Activated T-helper 1 cell treated with anti-CD3 and anti-CD28 coated beads, Interleukin-12 subunit alpha, Interleukin-12 subunit beta, Interleukin-2, Interleukin-4 antibody, amounts not matched to agents 30 ng/mL and 10 ng/mL and 1 ng/mL, durations not matched to agents 14 hours and 24 hours and 36 hours (primary cell): ENCODE measurements at regions of chr17 and their contacts with region 1.

Region 1: GRCh38 chr17:83079352-83079747 is at the start of gene METRNL:
- DNase-seq: peak; percentile 51
- H3K4me3 Mint-ChIP-seq: peak within 1 kb of the TSS; percentile 58
- H3K27ac Mint-ChIP-seq: no peak within 1 kb of the TSS
- H3K4me1 Mint-ChIP-seq: peaks cover 28% of the 10 kb centered on the region
- H3K27me3 Mint-ChIP-seq: peaks cover 11% of the 10 kb centered on the region
- total RNA-seq, gene METRNL: 31.1 and 31.4 TPM in 2 replicates

Region 2: GRCh38 chr17:82876602-82877379 is 202.6 kb before region 1 on chr17:
- intact Hi-C with region 1: loop called (anchors 5 kb)
- DNase-seq: no peak
- H3K4me3 Mint-ChIP-seq: peak overlapping the region; percentile 51
- H3K27ac Mint-ChIP-seq: peak overlapping the region; percentile 68
- H3K4me1 Mint-ChIP-seq: peaks cover 55% of the 10 kb centered on the region
- H3K27me3 Mint-ChIP-seq: no peaks in the 10 kb centered on the region

Region 3: DNA sequence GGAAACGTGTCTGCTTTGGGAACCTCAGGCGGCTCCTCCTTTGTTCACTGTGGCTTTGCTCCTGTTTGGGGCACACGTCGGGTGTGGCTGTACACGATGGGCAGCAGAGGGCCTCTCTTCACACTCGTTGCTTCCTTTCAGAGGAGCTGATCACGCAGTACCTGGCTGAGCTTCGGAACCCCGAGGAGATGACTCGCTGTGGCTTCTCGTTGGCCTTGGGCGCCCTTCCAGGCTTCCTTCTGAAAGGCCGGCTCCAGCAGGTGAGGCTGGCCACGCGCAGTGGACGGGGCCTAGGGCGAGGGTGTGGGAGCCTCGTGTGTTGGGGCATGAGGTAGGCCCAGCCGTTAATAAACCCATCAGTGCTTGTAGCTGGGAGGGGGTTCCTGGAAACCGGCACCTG is 154.6 kb before region 1 on chr17:
- intact Hi-C with region 1: no loop called
- DNase-seq: no peak
- H3K4me3 Mint-ChIP-seq: no peak overlapping the region
- H3K27ac Mint-ChIP-seq: no peak overlapping the region
- H3K4me1 Mint-ChIP-seq: no peaks in the 10 kb centered on the region
- H3K27me3 Mint-ChIP-seq: no peaks in the 10 kb centered on the region

Region 4: DNA sequence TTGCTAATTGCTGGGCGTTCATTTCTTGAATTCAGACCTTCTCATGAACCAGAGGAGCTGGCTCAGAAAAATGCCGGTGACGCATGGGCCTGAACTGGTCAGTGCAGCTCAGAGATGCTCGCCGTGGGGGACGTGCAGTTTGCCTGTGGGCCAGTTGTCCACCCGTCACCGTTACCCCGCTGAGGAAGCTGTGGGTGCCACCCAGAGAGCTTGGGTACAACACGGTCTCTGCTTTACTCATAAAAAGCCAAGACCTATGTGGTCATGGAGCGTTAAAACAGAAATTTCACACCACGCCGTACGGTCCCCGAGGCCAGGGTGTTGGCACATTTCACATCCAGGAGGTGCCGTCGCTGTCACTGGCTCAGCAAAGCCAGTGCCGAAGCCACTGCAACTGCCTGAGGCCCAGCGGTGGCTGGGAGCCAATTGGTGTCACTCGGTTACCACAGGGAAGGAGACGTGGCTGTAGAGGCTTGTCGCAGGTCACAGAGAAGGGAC is 120.9 kb after region 1 on chr17:
- intact Hi-C with region 1: loop called (anchors 1 kb)
- DNase-seq: peak; percentile 68
- H3K4me3 Mint-ChIP-seq: peak overlapping the region; percentile 81
- H3K27ac Mint-ChIP-seq: peak overlapping the region; percentile 96
- H3K4me1 Mint-ChIP-seq: peaks cover 47% of the 10 kb centered on the region
- H3K27me3 Mint-ChIP-seq: no peaks in the 10 kb centered on the region